AG04450 (cell line): ENCODE measurements at regions of chr1 and their contacts with region 1.

Region 1: DNA sequence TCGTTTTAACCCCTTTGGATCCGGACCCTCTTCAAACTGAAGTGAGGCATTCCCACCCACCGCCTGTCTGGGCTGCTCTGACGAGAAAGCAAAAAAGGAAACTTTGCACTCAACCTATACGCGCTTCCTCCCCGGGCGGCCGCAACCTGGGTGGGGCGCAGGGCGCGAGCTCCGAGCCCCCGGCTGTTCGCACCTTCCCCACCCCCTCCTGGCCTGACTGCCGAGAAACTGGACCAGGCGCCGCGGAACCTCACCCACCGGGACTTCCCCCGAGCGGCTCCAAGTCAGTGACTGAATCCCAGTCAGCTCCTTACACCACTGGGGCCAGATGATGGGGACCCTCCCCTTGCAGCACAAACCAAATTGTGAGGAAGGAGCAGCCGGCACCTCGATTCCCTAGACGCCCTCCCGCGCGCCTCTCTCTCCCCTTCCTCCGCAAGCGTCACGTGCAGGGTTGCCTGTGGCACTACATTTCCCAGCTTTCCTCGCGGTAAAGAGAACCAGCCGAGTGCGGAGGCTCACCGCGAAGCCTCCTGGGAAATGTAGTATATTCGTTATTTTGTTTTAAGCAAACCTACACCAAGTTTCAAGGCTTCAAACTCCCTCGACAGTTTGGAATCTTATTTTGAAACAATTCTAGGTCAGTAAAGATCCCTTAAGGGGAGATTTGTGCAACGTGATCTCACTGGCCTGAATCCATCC is at the start of gene RAB29:
- DNase-seq: peak; percentile 46
- H3K4me3 ChIP-seq: peak within 1 kb of the TSS; percentile 97
- H3K27ac ChIP-seq: peak within 1 kb of the TSS; percentile 47
- H3K27me3 ChIP-seq: peaks cover 2% of the 10 kb centered on the region
- CTCF ChIP-seq: no peak
- polyA plus RNA-seq, gene RAB29: 13.8 and 14.6 TPM in 2 replicates

Region 2: GRCh38 chr1:205756552-205756951 is 18.6 kb before region 1 on chr1:
- CTCF ChIA-PET with region 1: no interaction called
- POLR2A ChIA-PET with region 1: no interaction called
- DNase-seq: no peak
- H3K4me3 ChIP-seq: no peak overlapping the region
- H3K27ac ChIP-seq: no peak overlapping the region
- H3K27me3 ChIP-seq: peaks cover 2% of the 10 kb centered on the region
- CTCF ChIP-seq: no peak

Region 3: DNA sequence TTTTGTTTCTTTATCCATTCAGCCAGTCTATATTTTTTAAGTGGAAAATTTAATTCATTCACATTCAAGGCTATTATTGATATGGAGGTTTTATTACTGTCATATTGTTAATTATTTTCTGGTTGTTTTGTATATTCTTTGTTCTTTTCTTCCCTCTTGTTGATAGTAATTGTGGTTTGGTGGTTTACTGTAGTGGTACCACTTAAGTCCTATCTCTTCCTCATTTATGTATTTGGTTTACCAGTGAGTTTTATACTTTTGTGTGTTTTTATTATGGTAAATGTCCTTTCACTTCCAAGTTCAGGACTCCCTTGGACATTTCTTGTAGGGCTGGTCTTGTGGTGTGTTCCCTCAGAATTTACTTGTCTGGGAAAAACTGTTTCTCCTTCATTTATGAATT is 102.9 kb after region 1 on chr1:
- CTCF ChIA-PET with region 1: no interaction called
- POLR2A ChIA-PET with region 1: no interaction called
- DNase-seq: no peak
- H3K4me3 ChIP-seq: no peak overlapping the region
- H3K27ac ChIP-seq: no peak overlapping the region
- H3K27me3 ChIP-seq: peaks cover 20% of the 10 kb centered on the region
- CTCF ChIP-seq: no peak

Region 4: DNA sequence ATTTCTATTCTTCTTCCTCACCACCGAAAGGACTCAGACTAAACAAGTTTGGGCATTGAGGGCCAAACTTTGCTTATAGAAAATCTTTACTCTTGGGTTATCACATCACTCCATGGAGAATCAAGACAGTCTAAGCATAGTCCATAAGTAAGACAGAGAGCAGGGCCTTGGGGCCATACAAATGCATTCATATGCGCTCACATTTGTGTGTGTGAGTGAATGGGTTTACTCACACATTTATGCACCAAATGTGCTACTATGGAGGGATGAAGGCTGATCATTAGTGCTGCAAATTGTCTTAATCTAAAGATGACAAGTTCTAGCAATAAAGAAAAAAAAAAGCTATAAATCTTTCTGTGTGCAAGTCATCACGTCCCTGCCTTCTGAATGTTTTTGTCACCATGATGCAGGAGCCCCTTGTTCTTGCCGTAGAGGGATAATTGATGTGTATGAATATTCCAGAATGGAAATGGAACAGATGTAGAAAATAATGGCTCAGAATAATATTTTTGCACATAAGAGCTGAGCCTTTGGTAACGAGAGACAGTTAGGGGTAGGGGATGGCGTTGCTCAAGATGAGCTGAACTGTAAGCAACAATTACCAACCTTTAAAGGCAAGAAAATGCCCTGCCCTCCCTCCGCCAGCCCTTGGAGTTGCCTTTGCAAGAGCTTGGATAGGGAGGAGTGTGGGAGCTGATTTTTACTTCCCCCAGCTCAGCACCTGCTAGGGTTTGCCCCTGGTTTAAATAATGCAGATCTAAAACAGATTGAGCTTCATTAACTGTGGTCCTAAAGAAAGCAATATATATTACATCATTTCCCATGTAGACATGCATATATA is 642.8 kb after region 1 on chr1:
- CTCF ChIA-PET with region 1: interaction called, 10 read pairs
- POLR2A ChIA-PET with region 1: no interaction called
- DNase-seq: no peak
- H3K4me3 ChIP-seq: no peak overlapping the region
- H3K27ac ChIP-seq: no peak overlapping the region
- H3K27me3 ChIP-seq: no peaks in the 10 kb centered on the region
- CTCF ChIP-seq: no peak